ENCODE measurements at regions of chr1 and their contacts with region 1.

Region 1: GRCh38 chr1:15430787-15431570 is 7.3 kb upstream of the CTRC start:
- DNase-seq: peak; percentile 74
- ATAC-seq: peak; percentile 56
- H3K4me3 Mint-ChIP-seq: no peak overlapping the region
- H3K27ac Mint-ChIP-seq: no peak overlapping the region
- H3K4me1 Mint-ChIP-seq: peaks cover 8% of the 10 kb centered on the region
- H3K27me3 Mint-ChIP-seq: no peaks in the 10 kb centered on the region

Region 2: GRCh38 chr1:15341634-15342407 is 89.2 kb before region 1 on chr1:
- CTCF ChIA-PET with region 1: interaction called, 10 read pairs
- POLR2A ChIA-PET with region 1: no interaction called
- DNase-seq: no peak
- ATAC-seq: no peak
- H3K4me3 Mint-ChIP-seq: no peak overlapping the region
- H3K27ac Mint-ChIP-seq: peak overlapping the region; percentile 15
- H3K4me1 Mint-ChIP-seq: peaks cover 62% of the 10 kb centered on the region
- H3K27me3 Mint-ChIP-seq: peaks cover 9% of the 10 kb centered on the region

Region 3: GRCh38 chr1:15417365-15417934 is 13.5 kb before region 1 on chr1:
- CTCF ChIA-PET with region 1: interaction called, 13 read pairs
- POLR2A ChIA-PET with region 1: no interaction called
- DNase-seq: peak; percentile 52
- ATAC-seq: peak; percentile 43
- H3K4me3 Mint-ChIP-seq: peak overlapping the region; percentile 43
- H3K27ac Mint-ChIP-seq: peak overlapping the region; percentile 62
- H3K4me1 Mint-ChIP-seq: peaks cover 53% of the 10 kb centered on the region
- H3K27me3 Mint-ChIP-seq: no peaks in the 10 kb centered on the region

Region 4: GRCh38 chr1:15465674-15466073 is 34.7 kb after region 1 on chr1:
- CTCF ChIA-PET with region 1: no interaction called
- POLR2A ChIA-PET with region 1: no interaction called
- DNase-seq: no peak
- ATAC-seq: no peak
- H3K4me3 Mint-ChIP-seq: no peak overlapping the region
- H3K27ac Mint-ChIP-seq: no peak overlapping the region
- H3K4me1 Mint-ChIP-seq: no peaks in the 10 kb centered on the region
- H3K27me3 Mint-ChIP-seq: peaks cover 2% of the 10 kb centered on the region

Measured in activated CD8-positive, alpha-beta T cell treated with anti-CD3 and anti-CD28 coated beads, Interleukin-2, amount 10 ng/mL, durations not matched to agents 7 days and 5 days (primary cell).